Lower leg skin (tissue), 4 donors: ENCODE measurements at regions of chr4 and their contacts with region 1.

Region 1: DNA sequence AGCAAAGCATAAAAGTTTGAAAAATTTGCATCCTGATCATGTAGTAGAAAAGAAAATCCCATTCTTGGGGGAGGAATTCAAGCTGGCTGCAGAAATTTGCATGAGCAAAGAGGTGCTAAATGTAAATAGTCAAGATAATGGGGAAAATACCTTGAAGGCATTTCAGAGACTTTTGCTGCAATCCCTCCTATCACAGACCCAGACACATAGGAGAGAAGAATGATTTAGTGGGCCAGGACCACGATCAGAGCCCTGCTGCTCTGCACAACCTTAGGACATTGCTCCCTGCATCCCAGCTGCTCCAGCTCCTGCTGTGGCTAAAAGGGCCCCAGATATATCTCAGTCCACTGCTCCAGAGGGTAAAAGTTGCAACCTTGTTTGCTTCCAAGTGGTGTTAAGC is 1439.7 kb upstream of the AGA start:
- DNase-seq: no peak
- H3K4me3 ChIP-seq: no peak overlapping the region
- CTCF ChIP-seq: no peak
- POLR2A ChIP-seq: no peak

Region 2: GRCh38 chr4:180706766-180707165 is 1824.8 kb after region 1 on chr4:
- intact Hi-C with region 1: loop called (anchors 5 kb)
- DNase-seq: no peak
- H3K4me3 ChIP-seq: no peak overlapping the region
- CTCF ChIP-seq: no peak
- POLR2A ChIP-seq: no peak